ENCODE measurements at regions of chr11 and their contacts with region 1.

Region 1: DNA sequence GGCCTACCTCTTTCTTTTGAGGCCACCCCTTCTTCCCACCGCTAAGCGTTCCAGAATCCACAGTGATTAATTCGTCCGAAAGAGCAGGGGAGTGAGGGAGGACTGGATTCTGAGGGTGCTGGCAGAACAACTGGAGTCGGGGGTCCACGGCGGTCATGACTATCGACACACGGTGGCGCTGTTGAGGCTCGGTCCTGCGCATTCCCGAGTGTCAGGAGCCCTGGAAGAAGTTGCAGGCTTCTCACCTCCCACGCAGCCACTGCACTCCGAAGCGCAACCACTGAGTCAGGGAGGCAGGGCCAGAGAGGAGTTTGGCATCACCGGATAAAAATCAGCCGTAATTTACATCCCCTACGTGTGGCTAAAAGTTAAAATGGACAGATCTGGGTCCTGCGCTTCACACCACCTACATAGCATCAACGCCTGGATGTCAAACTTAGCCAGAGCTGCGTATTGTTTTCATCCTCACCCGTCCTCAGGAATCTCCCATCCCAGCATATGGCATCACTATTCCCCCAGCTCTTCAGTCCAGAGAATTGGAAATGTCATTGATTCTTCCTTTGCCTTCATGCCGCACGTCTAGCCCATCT is 10.7 kb upstream of the CTSF start:
- DNase-seq: peak; percentile 31 to 88 (median 65)
- ATAC-seq: peak; percentile 64 to 81 (median 76)
- H3K4me3 ChIP-seq: no peak overlapping the region
- H3K4me3 Mint-ChIP-seq: no peak overlapping the region
- H3K27ac ChIP-seq: no peak overlapping the region
- H3K27ac Mint-ChIP-seq: no peak overlapping the region
- H3K4me1 ChIP-seq: peaks cover 0 to 7% of the 10 kb centered on the region in 2 experiments
- H3K4me1 Mint-ChIP-seq: peaks cover 6 to 15% (median 10%) of the 10 kb centered on the region in 3 donors
- H3K27me3 ChIP-seq: peaks cover 0 to 14% of the 10 kb centered on the region in 2 experiments
- H3K27me3 Mint-ChIP-seq: peaks cover 5 to 16% of the 10 kb centered on the region in 2 donors

Region 2: GRCh38 chr11:66491315-66491935 is 87.7 kb before region 1 on chr11:
- CTCF ChIA-PET with region 1: interaction called in 1 of 2 experiments, 13 read pairs
- POLR2A ChIA-PET with region 1: no interaction called
- DNase-seq: no peak
- ATAC-seq: no peak
- H3K4me3 ChIP-seq: no peak overlapping the region
- H3K4me3 Mint-ChIP-seq: no peak overlapping the region
- H3K27ac ChIP-seq: no peak overlapping the region
- H3K27ac Mint-ChIP-seq: no peak overlapping the region
- H3K4me1 ChIP-seq: no peaks in the 10 kb centered on the region
- H3K4me1 Mint-ChIP-seq: no peaks in the 10 kb centered on the region
- H3K27me3 ChIP-seq: no peaks in the 10 kb centered on the region
- H3K27me3 Mint-ChIP-seq: no peaks in the 10 kb centered on the region

Region 3: DNA sequence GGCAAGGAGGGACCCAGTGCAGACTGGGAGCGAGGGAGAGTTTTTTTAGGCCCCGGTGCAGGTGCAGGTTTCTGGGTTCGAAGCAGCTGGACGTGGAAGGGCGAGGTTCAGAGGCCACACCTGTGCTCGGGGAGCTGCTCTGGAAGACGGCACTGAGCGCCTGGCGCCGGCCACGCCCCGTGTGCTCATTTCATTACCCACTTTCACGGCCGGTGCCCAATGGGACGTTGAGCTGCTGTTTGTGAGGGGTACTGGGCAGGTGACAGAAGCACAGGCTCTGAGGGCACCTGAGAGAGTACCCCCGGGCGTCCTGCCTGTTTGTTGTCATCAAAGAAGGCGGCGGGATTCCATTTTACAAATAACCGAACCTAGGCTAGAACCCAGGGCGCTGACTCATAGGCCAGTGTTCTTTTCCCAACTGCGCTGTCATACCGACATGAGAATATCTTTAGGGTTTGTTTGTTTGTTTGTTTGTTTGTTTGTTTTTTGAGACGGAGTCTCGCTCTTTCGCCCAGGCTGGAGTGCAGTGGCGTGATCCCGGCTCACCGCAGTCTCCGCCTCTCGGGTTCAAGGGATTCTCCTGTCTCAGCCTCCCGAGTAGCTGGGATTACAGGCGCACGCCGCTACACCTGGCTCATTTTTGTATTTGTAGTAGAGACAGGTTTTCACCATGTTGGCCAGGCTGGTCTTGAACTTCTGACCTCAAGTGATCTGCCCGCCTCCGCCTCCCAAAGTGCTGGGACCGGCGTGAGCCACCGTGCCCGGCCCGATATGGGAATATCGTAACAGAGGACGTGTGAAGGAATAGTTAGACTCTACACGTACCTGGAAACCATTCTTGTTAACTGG is 166.5 kb after region 1 on chr11:
- CTCF ChIA-PET with region 1: no interaction called
- POLR2A ChIA-PET with region 1: interaction called in 1 of 2 experiments, 11 read pairs
- DNase-seq: peak in 21 of 35 experiments; percentile 8 to 60 (median 23)
- ATAC-seq: peak; percentile 14 to 32 (median 20)
- H3K4me3 ChIP-seq: peak overlapping the region; percentile 57 to 92
- H3K4me3 Mint-ChIP-seq: peak overlapping the region; percentile 90 to 94 (median 91)
- H3K27ac ChIP-seq: no peak overlapping the region
- H3K27ac Mint-ChIP-seq: peak overlapping the region in 1 of 2 donors; percentile 28
- H3K4me1 ChIP-seq: peaks cover 0 to 21% of the 10 kb centered on the region in 2 experiments
- H3K4me1 Mint-ChIP-seq: peaks cover 4 to 9% (median 9%) of the 10 kb centered on the region in 3 donors
- H3K27me3 ChIP-seq: peaks cover 0 to 5% of the 10 kb centered on the region in 2 experiments
- H3K27me3 Mint-ChIP-seq: no peaks in the 10 kb centered on the region